Activated B cell treated with CpG ODN at 0.5 μM for 24 hours (primary cell): ENCODE measurements at regions of chr9 and their contacts with region 1.

Region 1: DNA sequence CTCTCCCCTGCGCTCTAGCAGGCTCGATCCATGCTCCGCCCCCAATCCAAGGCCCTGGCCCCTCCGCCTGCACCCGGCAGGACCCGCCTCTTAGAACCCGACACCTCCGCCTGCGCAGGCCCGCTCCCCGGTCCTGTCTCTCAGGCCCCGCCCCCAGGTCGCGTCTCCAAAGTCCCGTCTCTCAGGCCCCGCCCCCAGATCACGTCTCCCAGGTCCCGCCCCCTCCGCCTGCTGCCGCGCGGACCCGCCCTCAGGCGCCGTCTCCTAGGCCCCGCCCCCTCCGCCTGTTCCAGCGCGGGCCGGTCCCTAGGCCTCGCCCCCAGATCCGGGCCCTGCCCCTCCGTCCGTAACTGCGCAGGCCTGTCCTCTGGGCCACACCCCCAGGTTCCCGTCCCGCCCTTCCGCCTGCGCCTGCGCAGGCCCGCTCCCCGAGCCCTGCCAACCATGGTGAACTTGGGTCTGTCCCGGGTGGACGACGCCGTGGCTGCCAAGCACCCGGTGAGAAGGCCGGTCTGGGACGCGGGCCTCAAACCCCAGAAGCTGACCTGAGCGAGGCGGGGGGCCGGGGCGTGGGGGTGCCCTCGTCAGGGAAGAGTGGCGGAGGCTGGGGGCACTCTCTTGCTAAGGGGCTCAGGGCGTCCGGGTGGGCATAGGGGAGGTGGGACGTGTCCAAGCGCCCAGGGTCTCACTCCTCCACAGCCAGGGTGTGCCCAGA is at the start of gene TMEM141:
- DNase-seq: peak; percentile 99
- ATAC-seq: peak; percentile 87
- H3K4me3 Mint-ChIP-seq: peak within 1 kb of the TSS; percentile 86
- H3K27ac Mint-ChIP-seq: peak within 1 kb of the TSS; percentile 90
- H3K4me1 Mint-ChIP-seq: peaks cover 21% of the 10 kb centered on the region
- H3K27me3 Mint-ChIP-seq: no peaks in the 10 kb centered on the region
- CTCF ChIP-seq: no peak
- total RNA-seq, gene TMEM141: 34.9 and 35.8 TPM in 2 replicates

Region 2: DNA sequence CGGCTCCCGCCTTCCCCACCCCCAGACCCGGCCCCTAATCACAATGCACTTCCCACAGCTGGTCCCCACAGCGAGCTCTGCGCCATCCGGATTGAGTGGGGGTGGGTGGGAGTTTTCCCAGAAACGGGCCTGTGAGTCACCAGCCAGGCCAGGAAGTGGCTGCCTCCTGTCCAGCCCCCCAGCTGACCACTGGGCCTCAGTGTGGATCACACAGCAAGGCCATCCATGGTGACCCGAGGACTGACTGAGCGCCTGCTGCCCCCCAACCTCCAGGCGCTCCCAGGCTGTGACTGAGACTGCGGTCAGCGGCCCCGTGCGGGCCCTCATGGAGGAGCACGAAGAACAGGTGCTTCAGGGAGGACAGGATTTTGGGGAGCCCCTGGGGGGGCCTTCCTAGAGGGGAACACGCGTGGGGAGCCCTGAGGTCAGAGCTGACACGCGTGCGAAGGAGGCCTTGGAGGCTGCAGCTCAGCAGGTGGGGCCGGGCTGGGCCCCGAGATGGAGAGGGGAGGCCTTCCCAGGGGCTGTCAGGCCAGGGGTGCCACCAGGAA is 176.6 kb before region 1 on chr9:
- CTCF ChIA-PET with region 1: no interaction called
- POLR2A ChIA-PET with region 1: no interaction called
- intact Hi-C with region 1: no loop called
- DNase-seq: no peak
- ATAC-seq: no peak
- H3K4me3 Mint-ChIP-seq: no peak overlapping the region
- H3K27ac Mint-ChIP-seq: no peak overlapping the region
- H3K4me1 Mint-ChIP-seq: peaks cover 34% of the 10 kb centered on the region
- H3K27me3 Mint-ChIP-seq: no peaks in the 10 kb centered on the region
- CTCF ChIP-seq: no peak

Region 3: DNA sequence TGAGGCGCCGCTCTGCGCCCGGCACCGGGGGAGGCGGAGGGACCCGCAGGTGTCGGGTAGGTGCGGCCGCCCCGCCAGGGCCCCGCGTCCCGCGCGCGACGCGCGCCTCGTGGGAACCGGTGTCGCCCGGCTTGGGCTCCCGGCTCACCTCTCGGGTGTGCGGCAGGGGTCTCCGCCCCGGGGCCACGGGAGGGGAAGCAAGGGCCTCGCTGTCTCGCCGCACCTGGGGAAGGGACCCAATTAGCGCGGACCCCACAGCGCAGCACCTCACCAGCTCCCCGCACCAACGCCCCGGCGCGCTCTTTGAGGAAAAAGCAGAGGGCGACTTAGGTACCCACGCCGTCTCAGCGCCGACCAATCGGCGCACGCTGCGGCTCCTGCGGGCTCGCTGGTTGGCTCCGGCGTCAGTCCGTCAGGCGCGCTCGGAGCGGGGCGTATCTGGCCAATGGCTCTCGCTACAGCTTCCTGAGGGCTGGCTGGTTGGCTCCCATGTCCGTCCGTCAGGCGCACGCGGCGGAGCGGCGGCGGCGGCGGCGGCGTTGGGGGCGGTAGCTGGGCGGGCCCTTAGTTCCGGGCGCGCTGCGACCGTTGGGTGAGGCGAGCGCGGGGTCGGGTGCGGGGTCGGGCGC is 95.0 kb after region 1 on chr9 and contains the start of gene TRAF2:
- CTCF ChIA-PET with region 1: no interaction called
- POLR2A ChIA-PET with region 1: no interaction called
- intact Hi-C with region 1: loop called (anchors 2 kb)
- DNase-seq: peak; percentile 95
- ATAC-seq: peak; percentile 89
- H3K4me3 Mint-ChIP-seq: peak within 1 kb of the TSS; percentile 91
- H3K27ac Mint-ChIP-seq: peak within 1 kb of the TSS; percentile 88
- H3K4me1 Mint-ChIP-seq: peaks cover 44% of the 10 kb centered on the region
- H3K27me3 Mint-ChIP-seq: no peaks in the 10 kb centered on the region
- CTCF ChIP-seq: no peak
- total RNA-seq, gene TRAF2: 49.7 and 58.2 TPM in 2 replicates

Region 4: DNA sequence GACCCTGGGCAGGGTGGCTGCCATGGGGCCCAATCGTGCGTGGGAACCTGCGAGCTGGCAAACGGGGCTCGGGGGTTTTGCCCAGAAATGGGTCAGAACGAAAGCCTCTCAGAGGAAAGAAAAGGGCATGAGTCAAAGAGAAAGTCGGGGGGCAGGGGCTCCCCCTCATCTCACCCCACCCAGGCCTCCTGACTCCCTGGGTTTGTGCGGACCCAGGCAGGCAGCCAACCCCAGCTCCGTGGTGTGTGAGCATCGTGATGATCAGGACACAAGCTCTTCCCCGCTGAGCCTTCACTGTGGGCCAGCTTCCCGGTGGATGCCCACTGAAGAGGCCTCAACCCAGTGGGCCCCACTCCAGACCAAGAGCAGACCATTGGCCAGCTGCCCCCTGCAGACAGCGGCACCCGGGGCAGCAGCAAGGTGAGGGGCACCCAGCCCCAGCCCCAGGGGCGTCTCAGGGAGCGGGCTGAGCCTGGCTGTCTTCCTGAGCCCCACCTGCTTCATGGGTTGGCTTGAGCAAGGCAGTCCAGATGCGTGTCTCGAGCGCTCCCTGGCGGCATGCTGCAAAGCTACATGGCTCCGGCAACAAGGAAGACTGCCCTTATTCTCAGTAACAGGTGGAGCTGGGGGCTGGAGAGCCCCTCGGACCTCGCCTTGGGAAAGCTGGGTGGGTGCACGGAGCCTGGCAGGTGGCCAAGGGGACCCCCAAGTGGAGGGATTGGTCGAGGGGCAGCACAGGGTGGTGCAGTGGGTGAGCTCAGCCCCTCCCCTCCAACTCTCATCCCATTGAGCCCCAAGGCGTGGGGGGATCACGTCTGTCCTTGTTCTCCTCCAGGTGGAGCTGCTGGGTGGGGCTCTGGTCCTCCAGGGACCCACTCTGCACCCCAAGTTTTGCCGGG is 244.0 kb after region 1 on chr9:
- CTCF ChIA-PET with region 1: interaction called, 58 read pairs
- POLR2A ChIA-PET with region 1: interaction called, 4 read pairs
- intact Hi-C with region 1: loop called (anchors 1 kb)
- DNase-seq: peak; percentile 82
- ATAC-seq: peak; percentile 65
- H3K4me3 Mint-ChIP-seq: peak overlapping the region; percentile 67
- H3K27ac Mint-ChIP-seq: peak overlapping the region; percentile 75
- H3K4me1 Mint-ChIP-seq: peaks cover 47% of the 10 kb centered on the region
- H3K27me3 Mint-ChIP-seq: no peaks in the 10 kb centered on the region
- CTCF ChIP-seq: no peak

Region 5: DNA sequence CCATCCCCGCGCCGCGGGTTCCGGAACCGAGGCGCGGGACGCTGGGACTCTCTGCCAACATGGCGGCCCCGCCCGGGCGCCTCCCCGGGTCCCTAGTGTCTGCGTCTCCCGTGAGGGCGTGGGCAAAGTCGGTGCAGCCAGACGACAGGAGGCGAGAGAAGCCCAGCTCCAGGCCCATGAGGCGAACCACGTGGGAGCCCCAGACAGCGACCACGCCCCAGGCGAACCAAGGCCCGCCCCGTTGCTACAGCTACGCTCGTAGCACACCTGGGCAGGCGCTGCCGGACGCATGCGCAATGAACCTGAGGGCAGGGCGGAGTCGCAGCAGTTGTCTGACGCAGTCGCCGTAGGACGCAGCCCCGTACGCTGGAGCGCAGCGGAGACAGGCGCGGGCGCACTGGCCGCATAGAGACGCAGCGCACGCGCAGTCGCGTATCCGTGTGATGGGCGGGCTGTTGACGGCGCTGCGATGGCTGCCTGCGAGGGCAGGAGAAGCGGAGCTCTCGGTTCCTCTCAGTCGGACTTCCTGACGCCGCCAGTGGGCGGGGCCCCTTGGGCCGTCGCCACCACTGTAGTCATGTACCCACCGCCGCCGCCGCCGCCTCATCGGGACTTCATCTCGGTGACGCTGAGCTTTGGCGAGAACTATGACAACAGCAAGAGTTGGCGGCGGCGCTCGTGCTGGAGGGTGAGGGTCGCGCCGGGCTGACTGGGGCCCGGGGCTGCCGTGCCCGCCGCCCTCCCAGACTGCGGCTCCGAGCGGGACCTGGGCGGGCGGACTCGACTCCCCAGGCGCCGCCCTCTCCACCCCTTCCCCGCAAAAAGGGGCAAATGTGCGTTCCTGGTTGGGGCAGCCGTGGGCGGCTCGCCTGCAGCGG is 295.7 kb after region 1 on chr9 and contains the start of gene MAN1B1:
- CTCF ChIA-PET with region 1: no interaction called
- POLR2A ChIA-PET with region 1: no interaction called
- intact Hi-C with region 1: loop called (anchors 1 kb)
- DNase-seq: peak; percentile 98
- ATAC-seq: peak; percentile 77
- H3K4me3 Mint-ChIP-seq: peak within 1 kb of the TSS; percentile 93
- H3K27ac Mint-ChIP-seq: peak within 1 kb of the TSS; percentile 97
- H3K4me1 Mint-ChIP-seq: peaks cover 49% of the 10 kb centered on the region
- H3K27me3 Mint-ChIP-seq: no peaks in the 10 kb centered on the region
- CTCF ChIP-seq: no peak
- total RNA-seq, gene MAN1B1: 33.6 and 37.7 TPM in 2 replicates

Region 6: GRCh38 chr9:137459147-137459600 is 668.1 kb after region 1 on chr9 and contains the start of gene NSMF:
- CTCF ChIA-PET with region 1: no interaction called
- POLR2A ChIA-PET with region 1: no interaction called
- intact Hi-C with region 1: loop called (anchors 2 kb)
- DNase-seq: peak; percentile 98
- ATAC-seq: peak; percentile 76
- H3K4me3 Mint-ChIP-seq: peak within 1 kb of the TSS; percentile 73
- H3K27ac Mint-ChIP-seq: peak within 1 kb of the TSS; percentile 46
- H3K4me1 Mint-ChIP-seq: peaks cover 25% of the 10 kb centered on the region
- H3K27me3 Mint-ChIP-seq: no peaks in the 10 kb centered on the region
- CTCF ChIP-seq: no peak
- total RNA-seq, gene NSMF: 22.5 and 24.7 TPM in 2 replicates